Right ventricle myocardium superior (tissue), 1 donor: ENCODE measurements at regions of chr12 and their contacts with region 1.

Region 1: GRCh38 chr12:124939428-124940142 is 25.1 kb upstream of the UBC start:
- DNase-seq: peak; percentile 89
- ATAC-seq: peak; percentile 84

Region 2: DNA sequence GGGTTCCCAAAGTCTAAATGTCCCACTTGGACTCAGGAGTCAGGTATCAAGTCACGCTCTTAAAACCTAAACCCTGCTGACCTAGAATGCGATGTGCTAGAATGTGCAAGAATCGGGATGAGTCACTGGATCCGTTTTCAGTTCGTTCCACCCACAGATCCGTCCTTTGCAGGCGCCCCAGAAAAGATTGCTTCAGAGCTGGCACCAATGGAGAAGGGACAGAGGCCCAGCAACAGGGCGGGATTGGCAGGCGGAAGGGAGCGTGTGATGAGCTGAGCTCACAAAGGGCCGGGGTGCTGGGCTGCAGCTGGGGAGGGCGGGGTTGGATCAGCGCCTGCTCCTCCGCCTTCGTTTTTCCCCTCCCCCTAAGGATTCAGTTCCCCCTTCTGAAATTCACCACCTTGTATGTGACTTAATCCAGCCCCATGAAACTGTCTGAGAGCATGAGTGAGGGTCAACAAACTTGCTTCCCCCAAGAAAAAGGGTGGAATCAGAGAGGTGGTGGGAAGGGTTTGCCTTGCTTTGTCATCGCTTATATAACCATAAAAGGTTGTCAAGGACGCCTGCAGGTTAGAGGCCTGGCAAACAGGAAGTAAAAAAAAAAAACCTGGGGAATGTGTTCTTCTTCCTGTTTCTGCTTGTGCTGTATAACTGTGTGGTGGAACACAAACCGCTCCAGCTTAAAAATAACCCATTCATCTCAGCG is 22.3 kb before region 1 on chr12:
- intact Hi-C with region 1: loop called (anchors 2 kb)
- DNase-seq: peak; percentile 98
- ATAC-seq: peak; percentile 89

Region 3: GRCh38 chr12:125330645-125331341 is 391.2 kb after region 1 on chr12:
- intact Hi-C with region 1: no loop called
- DNase-seq: peak; percentile 76
- ATAC-seq: peak; percentile 99